ENCODE measurements at regions of chr21 and their contacts with region 1.

Region 1: DNA sequence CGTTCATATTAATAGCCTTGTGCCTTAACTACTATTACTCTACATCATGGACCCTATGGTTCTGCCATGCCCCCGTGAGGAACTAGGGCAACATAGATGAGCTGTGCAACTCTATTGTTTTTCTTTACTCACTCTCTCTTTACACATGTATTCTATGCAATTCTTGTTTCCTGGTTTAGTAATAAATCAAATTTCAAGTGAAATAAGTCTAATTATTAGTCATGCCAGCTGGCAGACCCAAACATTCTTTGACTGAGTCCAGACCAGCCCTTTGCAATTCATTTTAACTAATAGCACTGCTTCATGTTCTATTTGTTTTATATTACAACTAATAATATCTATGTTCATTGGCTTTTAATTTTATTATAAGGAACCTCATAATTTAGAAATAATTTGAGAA is 789.3 kb upstream of the ADAMTS5 start:
- DNase-seq: no peak
- H3K4me3 ChIP-seq: no peak overlapping the region
- H3K4me3 Mint-ChIP-seq: no peak overlapping the region
- H3K27ac ChIP-seq: no peak overlapping the region
- H3K27ac Mint-ChIP-seq: no peak overlapping the region
- H3K4me1 ChIP-seq: no peaks in the 10 kb centered on the region
- H3K4me1 Mint-ChIP-seq: no peaks in the 10 kb centered on the region
- H3K27me3 ChIP-seq: no peaks in the 10 kb centered on the region
- H3K27me3 Mint-ChIP-seq: peaks cover 2 to 3% (median 2%) of the 10 kb centered on the region in 3 donors
- CTCF ChIP-seq: no peak

Region 2: DNA sequence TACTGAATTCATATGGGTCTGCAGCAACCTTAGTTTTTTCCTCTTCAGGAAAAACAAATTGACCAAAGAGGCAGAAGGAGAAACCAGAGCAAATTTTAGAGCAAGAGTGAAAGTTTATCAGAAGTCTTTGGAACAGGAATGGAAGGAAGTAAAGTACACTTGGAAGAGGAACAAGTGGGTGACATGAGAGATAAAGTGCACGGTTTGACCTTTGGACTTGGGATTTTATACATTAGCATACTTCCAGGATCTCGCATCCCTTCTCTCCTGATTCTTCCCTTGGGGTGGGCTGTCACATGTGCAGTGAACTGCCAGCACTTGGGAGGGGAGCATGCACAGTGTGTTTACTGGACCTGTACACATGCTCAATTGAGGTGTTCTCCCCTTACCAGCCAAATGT is 34.5 kb before region 1 on chr21:
- intact Hi-C with region 1: loop called in 1 of 2 experiments (anchors 2 kb)
- DNase-seq: no peak
- H3K4me3 ChIP-seq: no peak overlapping the region
- H3K4me3 Mint-ChIP-seq: no peak overlapping the region
- H3K27ac ChIP-seq: no peak overlapping the region
- H3K27ac Mint-ChIP-seq: no peak overlapping the region
- H3K4me1 ChIP-seq: no peaks in the 10 kb centered on the region
- H3K4me1 Mint-ChIP-seq: no peaks in the 10 kb centered on the region
- H3K27me3 ChIP-seq: no peaks in the 10 kb centered on the region
- H3K27me3 Mint-ChIP-seq: no peaks in the 10 kb centered on the region
- CTCF ChIP-seq: no peak